Posterior vena cava (tissue), 2 donors: ENCODE measurements at regions of chr12 and their contacts with region 1.

Region 1: GRCh38 chr12:60672949-60673348 is 1077.1 kb downstream of the SLC16A7 start:
- DNase-seq: no peak

Region 2: DNA sequence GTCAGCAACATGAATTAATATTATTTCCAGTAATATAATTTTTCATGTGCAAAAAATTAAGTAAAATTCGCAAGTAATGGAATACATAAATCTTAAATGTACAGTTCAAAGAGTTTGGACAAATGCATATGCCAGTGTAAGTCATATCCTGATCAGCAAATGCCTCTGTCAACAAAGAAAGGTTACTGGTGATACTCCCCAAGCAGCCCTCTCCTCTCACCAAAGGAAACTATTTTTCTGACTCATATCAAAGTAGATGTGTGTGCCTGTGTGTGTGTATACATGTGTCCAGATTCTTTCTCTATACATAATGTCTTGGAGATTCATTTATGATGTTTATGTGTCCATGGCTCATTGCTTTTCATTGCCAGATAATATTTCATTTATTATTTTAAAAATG is 42.2 kb before region 1 on chr12:
- intact Hi-C with region 1: loop called in 1 of 2 experiments (anchors 2 kb)
- DNase-seq: no peak

Region 3: DNA sequence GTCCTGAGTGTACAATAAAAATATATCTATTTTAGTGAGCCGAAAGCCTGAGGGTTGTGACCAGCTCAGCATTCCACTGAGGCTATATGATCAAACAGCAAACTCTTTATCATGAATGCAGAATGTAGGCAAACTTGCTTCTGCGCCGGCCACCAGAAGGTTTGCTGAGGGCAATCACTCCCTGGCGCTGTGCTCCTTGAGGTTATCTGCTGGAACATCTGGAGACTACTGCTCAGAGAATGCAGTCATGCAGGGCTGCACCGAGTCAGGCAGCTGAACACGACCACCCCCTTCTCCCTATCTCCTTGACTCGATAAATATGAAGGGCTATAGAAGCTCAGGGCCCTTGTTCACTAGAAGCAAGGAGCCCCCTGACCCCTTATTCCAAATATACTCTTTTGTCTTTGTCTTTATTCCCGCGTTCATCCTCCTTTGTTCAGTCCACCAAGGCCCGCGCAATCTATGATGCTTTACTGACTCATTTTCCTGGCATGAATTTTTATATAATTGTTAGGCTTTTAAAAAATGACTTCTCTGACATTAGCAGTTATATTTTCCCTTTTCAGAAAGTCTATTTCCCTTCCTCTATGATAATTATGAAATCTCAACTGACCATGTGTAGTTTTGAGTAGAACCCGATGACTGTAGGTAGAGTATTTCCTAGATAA is 12.2 kb after region 1 on chr12:
- intact Hi-C with region 1: no loop called
- DNase-seq: peak; percentile 42

Region 4: GRCh38 chr12:60724984-60725383 is 52.0 kb after region 1 on chr12:
- intact Hi-C with region 1: no loop called
- DNase-seq: no peak